ENCODE measurements at regions of chr1 and their contacts with region 1.

Region 1: DNA sequence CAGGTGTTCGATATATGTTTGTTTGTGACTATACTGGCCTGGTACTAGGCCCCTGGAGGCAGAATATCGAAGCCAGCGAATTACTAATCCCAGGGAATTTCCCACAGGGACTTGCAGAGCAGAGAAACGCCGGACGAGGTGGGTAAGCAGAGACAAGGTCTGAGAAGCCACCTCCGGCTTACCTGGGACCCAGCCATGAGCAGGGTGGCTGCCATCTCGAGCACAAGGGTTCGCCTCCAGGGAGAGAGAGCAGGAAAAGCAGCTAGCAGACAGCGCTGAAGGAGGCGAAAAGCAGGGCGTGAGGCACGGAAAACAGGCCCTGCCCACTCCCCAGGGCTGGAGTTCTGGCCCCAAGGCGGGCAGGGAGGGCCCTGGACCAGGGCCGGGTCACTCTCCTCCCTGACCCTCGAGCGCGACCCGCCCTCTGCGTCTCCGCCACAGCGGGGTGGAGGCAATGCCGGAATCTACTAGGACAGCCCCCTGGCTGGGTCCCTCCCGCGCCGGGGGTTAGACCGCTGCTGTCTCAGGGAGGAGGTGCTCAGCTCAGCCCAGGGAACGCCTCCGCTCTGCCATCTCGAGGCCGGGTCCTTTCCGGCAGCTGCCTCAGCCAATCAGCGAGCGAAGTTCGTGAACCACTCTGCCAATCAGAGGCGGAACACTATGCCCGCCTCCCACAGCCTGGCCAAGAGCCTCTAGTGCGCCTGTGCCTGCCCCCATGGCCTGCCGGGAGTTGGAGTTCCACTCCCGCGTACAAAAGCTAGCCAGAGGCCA is 1.7 kb downstream of the ZNF436 start:
- DNase-seq: peak; percentile 98
- ATAC-seq: peak; percentile 90
- H3K4me3 ChIP-seq: peak overlapping the region; percentile 65 to 69
- H3K27ac ChIP-seq: peak overlapping the region; percentile 90
- H3K4me1 ChIP-seq: peaks cover 23 to 33% of the 10 kb centered on the region in 2 experiments
- H3K27me3 ChIP-seq: no peaks in the 10 kb centered on the region
- CTCF ChIP-seq: no peak
- POLR2A ChIP-seq: no peak
- RAD21 ChIP-seq: no peak

Region 2: GRCh38 chr1:23004112-23004511 is 363.9 kb before region 1 on chr1:
- CTCF ChIA-PET with region 1: no interaction called
- POLR2A ChIA-PET with region 1: no interaction called
- RAD21 ChIA-PET with region 1: no interaction called
- intact Hi-C with region 1: no loop called
- DNase-seq: no peak
- ATAC-seq: no peak
- H3K4me3 ChIP-seq: no peak overlapping the region
- H3K27ac ChIP-seq: no peak overlapping the region
- H3K4me1 ChIP-seq: no peaks in the 10 kb centered on the region
- H3K27me3 ChIP-seq: no peaks in the 10 kb centered on the region
- CTCF ChIP-seq: no peak
- POLR2A ChIP-seq: no peak
- RAD21 ChIP-seq: no peak

Region 3: GRCh38 chr1:23344111-23344986 is 23.6 kb before region 1 on chr1 and contains the start of gene HNRNPR:
- CTCF ChIA-PET with region 1: interaction called, 8 read pairs
- POLR2A ChIA-PET with region 1: interaction called, 30 read pairs
- RAD21 ChIA-PET with region 1: interaction called, 3 to 5 read pairs
- intact Hi-C with region 1: no loop called
- DNase-seq: peak; percentile 100
- ATAC-seq: peak; percentile 96
- H3K4me3 ChIP-seq: peak within 1 kb of the TSS; percentile 71 to 76
- H3K27ac ChIP-seq: peak within 1 kb of the TSS; percentile 85
- H3K4me1 ChIP-seq: peaks cover 11 to 37% of the 10 kb centered on the region in 2 experiments
- H3K27me3 ChIP-seq: no peaks in the 10 kb centered on the region
- CTCF ChIP-seq: no peak
- POLR2A ChIP-seq: peak; percentile 63
- RAD21 ChIP-seq: no peak
- total RNA-seq, gene HNRNPR: 194 TPM